Kidney (tissue), 22 donors: ENCODE measurements at regions of chr7 and their contacts with region 1.

Region 1: GRCh38 chr7:142853739-142854371 is 1.0 kb upstream of the EPHB6 start:
- DNase-seq: peak; percentile 79 to 90 (median 88)
- H3K4me3 ChIP-seq: peak overlapping the region; percentile 83 to 89 (median 84)
- H3K27ac ChIP-seq: no peak overlapping the region
- H3K4me1 ChIP-seq: peaks cover 0 to 6% (median 0%) of the 10 kb centered on the region in 3 donors
- H3K27me3 ChIP-seq: no peaks in the 10 kb centered on the region
- CTCF ChIP-seq: peak; percentile 66

Region 2: GRCh38 chr7:142782922-142783900 is 70.6 kb before region 1 on chr7:
- intact Hi-C with region 1: no loop called
- DNase-seq: peak; percentile 92 to 95 (median 94)
- H3K4me3 ChIP-seq: peak overlapping the region in 1 of 3 donors; percentile 58
- H3K27ac ChIP-seq: no peak overlapping the region
- H3K4me1 ChIP-seq: no peaks in the 10 kb centered on the region
- H3K27me3 ChIP-seq: no peaks in the 10 kb centered on the region
- CTCF ChIP-seq: peak; percentile 98

Region 3: GRCh38 chr7:142908921-142909890 is 55.4 kb after region 1 on chr7:
- intact Hi-C with region 1: no loop called
- DNase-seq: no peak
- H3K4me3 ChIP-seq: no peak overlapping the region
- H3K27ac ChIP-seq: no peak overlapping the region
- H3K4me1 ChIP-seq: peaks cover 0 to 2% (median 0%) of the 10 kb centered on the region in 3 donors
- H3K27me3 ChIP-seq: no peaks in the 10 kb centered on the region
- CTCF ChIP-seq: peak; percentile 26

Region 4: DNA sequence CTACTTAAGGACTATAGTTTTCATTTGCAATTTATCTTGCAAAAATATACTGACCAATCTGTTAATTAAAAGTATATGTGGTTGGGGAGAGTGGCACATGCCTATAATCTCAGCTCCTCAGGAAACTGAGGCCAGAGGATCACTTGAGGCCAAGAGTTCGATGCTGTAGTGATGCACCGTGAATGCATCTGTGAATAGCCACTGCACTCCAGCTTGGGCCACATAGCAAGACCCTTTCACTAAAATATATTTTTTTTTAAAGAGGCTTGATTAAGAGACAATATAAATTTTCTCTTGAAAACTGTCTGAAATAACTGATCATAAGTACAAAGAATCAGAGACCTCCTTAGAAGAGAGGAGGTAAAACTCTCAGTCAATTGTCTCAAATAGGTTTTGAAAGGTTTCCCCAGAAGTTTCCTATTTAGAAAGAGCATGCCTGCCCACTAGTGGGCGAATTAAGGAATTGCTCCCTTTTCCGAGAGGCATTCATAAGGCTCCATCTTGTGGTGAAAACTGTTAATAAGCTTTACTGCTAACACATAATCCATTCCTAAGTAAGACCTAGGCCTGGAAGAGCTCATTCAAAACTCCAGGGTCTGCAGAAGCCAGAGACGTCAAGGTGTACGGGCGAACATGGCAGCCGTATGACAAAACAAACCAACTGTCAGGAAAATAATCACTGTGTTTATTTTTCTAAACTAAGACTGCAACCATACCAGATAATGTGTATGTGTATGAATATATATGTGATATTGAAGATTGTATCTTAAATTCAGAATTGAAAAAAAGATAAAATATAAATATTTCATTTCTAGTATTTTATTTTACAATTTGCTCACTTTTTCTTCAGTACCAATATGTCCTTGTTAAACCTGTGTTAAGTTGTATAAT is 361.2 kb after region 1 on chr7:
- intact Hi-C with region 1: loop called (anchors 10 kb)
- DNase-seq: peak in 4 of 5 donors; percentile 66 to 93 (median 81)
- H3K4me3 ChIP-seq: no peak overlapping the region
- H3K27ac ChIP-seq: no peak overlapping the region
- H3K4me1 ChIP-seq: no peaks in the 10 kb centered on the region
- H3K27me3 ChIP-seq: no peaks in the 10 kb centered on the region
- CTCF ChIP-seq: peak; percentile 100